ENCODE measurements at regions of chr5 and their contacts with region 1.

Region 1: GRCh38 chr5:178514851-178515418 is 75.3 kb downstream of the COL23A1 start:
- DNase-seq: no peak
- H3K4me3 ChIP-seq: no peak overlapping the region
- H3K4me3 Mint-ChIP-seq: no peak overlapping the region
- H3K27ac ChIP-seq: no peak overlapping the region
- H3K27ac Mint-ChIP-seq: no peak overlapping the region
- H3K4me1 ChIP-seq: no peaks in the 10 kb centered on the region
- H3K4me1 Mint-ChIP-seq: peaks cover 2% of the 10 kb centered on the region
- H3K27me3 ChIP-seq: no peaks in the 10 kb centered on the region
- H3K27me3 Mint-ChIP-seq: peaks cover 1 to 6% (median 5%) of the 10 kb centered on the region in 3 donors
- CTCF ChIP-seq: no peak

Region 2: DNA sequence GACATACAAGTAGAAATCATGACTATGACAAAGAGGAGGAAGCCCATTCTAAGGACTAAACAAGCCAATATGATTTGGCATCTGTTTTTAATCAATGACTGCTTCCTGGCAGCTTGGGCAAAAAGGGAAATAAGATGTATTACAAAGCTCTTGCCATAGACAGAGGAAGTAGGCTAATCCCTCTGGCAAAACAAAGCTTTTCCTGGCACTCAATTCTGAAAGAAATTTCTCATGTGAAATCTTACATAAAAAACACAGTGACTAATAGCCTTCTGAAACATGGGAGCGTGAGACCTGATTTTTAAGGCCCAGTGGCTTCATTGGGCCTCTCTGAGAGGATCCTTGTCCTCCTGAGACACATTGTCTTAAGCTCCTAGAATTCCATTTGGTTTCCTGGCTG is 18.3 kb before region 1 on chr5:
- intact Hi-C with region 1: loop called in 1 of 2 experiments (anchors 1 kb)
- DNase-seq: peak in 2 of 3 donors; percentile 55 to 63
- H3K4me3 ChIP-seq: no peak overlapping the region
- H3K4me3 Mint-ChIP-seq: no peak overlapping the region
- H3K27ac ChIP-seq: no peak overlapping the region
- H3K27ac Mint-ChIP-seq: peak overlapping the region in 4 of 7 donors; percentile 4 to 82 (median 20)
- H3K4me1 ChIP-seq: peaks cover 10 to 30% of the 10 kb centered on the region in 2 donors
- H3K4me1 Mint-ChIP-seq: peaks cover 27% of the 10 kb centered on the region
- H3K27me3 ChIP-seq: no peaks in the 10 kb centered on the region
- H3K27me3 Mint-ChIP-seq: peaks cover 0 to 5% (median 2%) of the 10 kb centered on the region in 3 donors
- CTCF ChIP-seq: no peak

Region 3: DNA sequence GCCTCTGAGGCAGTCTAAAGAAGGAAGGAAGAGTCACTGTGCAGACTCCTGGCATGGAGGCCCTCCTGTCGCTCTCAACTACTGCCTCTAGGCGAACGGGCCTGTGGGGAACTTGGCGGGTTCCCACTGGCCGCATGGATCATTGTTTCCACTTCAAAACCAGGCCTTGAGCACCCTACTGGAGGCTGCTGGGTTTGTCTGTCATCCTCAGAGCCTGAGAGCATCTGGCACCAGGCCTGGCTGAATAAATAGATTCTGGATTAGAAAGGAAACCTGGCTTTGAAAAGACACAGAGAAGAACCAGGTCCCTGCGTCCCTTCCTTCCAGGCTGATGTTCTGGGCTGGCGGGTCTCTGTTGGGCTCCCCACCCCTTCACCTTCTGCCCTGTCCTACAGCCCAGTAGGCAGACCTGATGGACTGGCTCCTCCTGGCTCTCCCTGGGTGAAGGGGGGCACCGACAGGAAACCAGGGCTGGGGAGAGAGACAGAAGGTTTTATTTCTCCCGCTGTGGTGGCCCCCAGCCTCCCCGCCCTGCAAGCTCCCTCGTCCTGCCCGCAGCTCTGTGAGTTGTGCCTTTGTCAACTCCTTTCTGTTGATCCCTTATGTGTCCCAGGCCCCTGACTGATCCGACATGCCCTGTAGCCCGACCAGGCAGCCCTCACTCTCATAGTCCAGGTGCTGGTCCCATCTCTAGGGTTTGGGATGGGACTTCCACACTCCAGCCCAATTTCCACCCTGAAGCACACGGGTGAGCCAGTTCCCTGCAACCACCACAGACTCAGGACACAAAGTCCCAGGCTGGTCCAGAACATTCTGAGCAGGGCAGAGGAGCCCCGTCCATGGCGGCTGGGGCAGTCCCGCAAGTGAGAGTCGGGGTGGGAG is 780.2 kb after region 1 on chr5:
- intact Hi-C with region 1: no loop called
- DNase-seq: no peak
- H3K4me3 ChIP-seq: no peak overlapping the region
- H3K4me3 Mint-ChIP-seq: no peak overlapping the region
- H3K27ac ChIP-seq: no peak overlapping the region
- H3K27ac Mint-ChIP-seq: no peak overlapping the region
- H3K4me1 ChIP-seq: no peaks in the 10 kb centered on the region
- H3K4me1 Mint-ChIP-seq: no peaks in the 10 kb centered on the region
- H3K27me3 ChIP-seq: no peaks in the 10 kb centered on the region
- H3K27me3 Mint-ChIP-seq: peaks cover 2 to 9% (median 4%) of the 10 kb centered on the region in 3 donors
- CTCF ChIP-seq: no peak